Breast epithelium (tissue), 4 donors: ENCODE measurements at regions of chr18 and their contacts with region 1.

Region 1: DNA sequence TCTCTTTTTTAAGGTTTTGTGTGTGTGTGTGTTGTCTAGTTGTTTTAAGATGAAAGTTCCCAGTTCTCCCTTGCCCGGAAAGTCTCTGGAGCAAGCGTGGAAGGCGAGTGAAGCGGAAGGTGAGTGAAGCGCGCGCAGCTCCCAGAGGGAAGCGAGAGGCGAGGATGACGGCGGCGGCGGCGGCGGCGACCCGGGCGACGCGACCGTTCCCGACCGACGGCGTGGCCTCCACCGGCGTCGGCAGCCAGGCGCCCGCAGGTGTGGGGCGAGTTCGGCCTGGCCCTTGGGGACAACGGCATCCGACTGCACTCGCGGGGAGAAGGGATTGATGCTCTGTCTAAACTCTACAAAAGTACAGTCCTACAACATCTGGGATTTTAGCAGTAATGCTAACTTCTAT is 321.9 kb downstream of the CELF4 start:
- DNase-seq: no peak
- H3K4me3 ChIP-seq: no peak overlapping the region
- H3K27ac ChIP-seq: no peak overlapping the region
- H3K4me1 ChIP-seq: no peaks in the 10 kb centered on the region
- H3K27me3 ChIP-seq: no peaks in the 10 kb centered on the region
- CTCF ChIP-seq: no peak
- POLR2A ChIP-seq: no peak

Region 2: GRCh38 chr18:38872342-38872741 is 1628.6 kb after region 1 on chr18:
- intact Hi-C with region 1: loop called (anchors 10 kb)
- DNase-seq: no peak
- H3K4me3 ChIP-seq: no peak overlapping the region
- H3K27ac ChIP-seq: no peak overlapping the region
- H3K4me1 ChIP-seq: no peaks in the 10 kb centered on the region
- H3K27me3 ChIP-seq: no peaks in the 10 kb centered on the region
- CTCF ChIP-seq: no peak
- POLR2A ChIP-seq: no peak